Endothelial cell of umbilical vein (primary cell): ENCODE measurements at regions of chr4 and their contacts with region 1.

Region 1: GRCh38 chr4:113394730-113395530 is 345.5 kb downstream of the ANK2 start:
- DNase-seq: peak; percentile 92
- H3K4me3 ChIP-seq: no peak overlapping the region
- H3K27ac ChIP-seq: no peak overlapping the region
- H3K4me1 ChIP-seq: peaks cover 6% of the 10 kb centered on the region
- H3K27me3 ChIP-seq: no peaks in the 10 kb centered on the region
- CTCF ChIP-seq: peak; percentile 43 to 50
- POLR2A ChIP-seq: no peak

Region 2: GRCh38 chr4:113278324-113278934 is 116.5 kb before region 1 on chr4:
- CTCF ChIA-PET with region 1: interaction called, 3 read pairs
- POLR2A ChIA-PET with region 1: no interaction called
- dilution Hi-C with region 1: no loop called
- intact Hi-C with region 1: loop called (anchors 2 kb)
- DNase-seq: peak; percentile 70
- H3K4me3 ChIP-seq: no peak overlapping the region
- H3K27ac ChIP-seq: no peak overlapping the region
- H3K4me1 ChIP-seq: no peaks in the 10 kb centered on the region
- H3K27me3 ChIP-seq: peaks cover 5 to 19% of the 10 kb centered on the region in 2 experiments
- CTCF ChIP-seq: peak; percentile 86 to 87
- POLR2A ChIP-seq: no peak

Region 3: DNA sequence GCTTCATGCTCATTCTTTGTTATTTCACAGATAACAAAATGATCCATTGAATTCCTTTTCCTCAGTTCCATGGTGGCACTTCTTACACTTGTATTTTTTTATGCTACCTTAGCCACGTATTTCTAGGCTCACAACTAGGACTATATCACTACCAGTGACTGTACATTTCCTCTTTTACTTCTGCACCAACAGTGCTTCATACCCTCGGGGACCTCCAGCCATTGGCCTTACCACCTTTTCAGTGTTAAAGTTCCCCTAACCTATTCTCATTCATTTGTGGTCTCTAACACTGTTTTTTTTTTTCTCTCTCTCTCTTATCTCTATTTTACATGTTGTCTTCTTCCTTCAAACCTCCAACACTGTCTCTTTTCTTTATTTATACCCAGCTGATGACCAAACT is 29.6 kb before region 1 on chr4:
- CTCF ChIA-PET with region 1: no interaction called
- POLR2A ChIA-PET with region 1: no interaction called
- dilution Hi-C with region 1: no loop called
- intact Hi-C with region 1: no loop called
- DNase-seq: no peak
- H3K4me3 ChIP-seq: no peak overlapping the region
- H3K27ac ChIP-seq: no peak overlapping the region
- H3K4me1 ChIP-seq: no peaks in the 10 kb centered on the region
- H3K27me3 ChIP-seq: no peaks in the 10 kb centered on the region
- CTCF ChIP-seq: no peak
- POLR2A ChIP-seq: no peak

Region 4: GRCh38 chr4:113539408-113539807 is 144.5 kb after region 1 on chr4:
- CTCF ChIA-PET with region 1: interaction called, 10 read pairs
- POLR2A ChIA-PET with region 1: no interaction called
- dilution Hi-C with region 1: no loop called
- intact Hi-C with region 1: no loop called
- DNase-seq: no peak
- H3K4me3 ChIP-seq: no peak overlapping the region
- H3K27ac ChIP-seq: no peak overlapping the region
- H3K4me1 ChIP-seq: no peaks in the 10 kb centered on the region
- H3K27me3 ChIP-seq: no peaks in the 10 kb centered on the region
- CTCF ChIP-seq: no peak
- POLR2A ChIP-seq: no peak

Region 5: DNA sequence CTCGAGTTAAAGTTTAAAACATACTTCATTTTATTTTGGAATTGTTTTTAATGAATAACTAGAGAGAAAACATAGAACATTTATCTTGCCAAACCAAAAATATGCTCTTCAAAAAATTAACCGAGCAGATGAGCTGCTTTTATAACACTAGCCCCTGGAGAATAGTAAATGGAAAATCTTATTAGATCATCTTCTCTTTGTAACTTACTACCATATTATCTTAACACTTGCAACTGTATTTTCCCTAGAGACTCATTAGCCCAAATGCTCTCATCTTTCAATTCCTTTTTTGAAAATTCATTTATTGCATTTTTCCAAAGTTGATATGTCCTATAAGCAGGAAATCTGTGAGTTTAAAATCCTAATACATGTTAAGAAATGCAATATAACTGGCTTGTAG is 223.3 kb after region 1 on chr4:
- CTCF ChIA-PET with region 1: no interaction called
- POLR2A ChIA-PET with region 1: no interaction called
- dilution Hi-C with region 1: no loop called
- intact Hi-C with region 1: no loop called
- DNase-seq: no peak
- H3K4me3 ChIP-seq: no peak overlapping the region
- H3K27ac ChIP-seq: no peak overlapping the region
- H3K4me1 ChIP-seq: no peaks in the 10 kb centered on the region
- H3K27me3 ChIP-seq: no peaks in the 10 kb centered on the region
- CTCF ChIP-seq: no peak
- POLR2A ChIP-seq: no peak

Region 6: GRCh38 chr4:113781439-113782040 is 386.6 kb after region 1 on chr4:
- CTCF ChIA-PET with region 1: interaction called, 13 read pairs
- POLR2A ChIA-PET with region 1: no interaction called
- dilution Hi-C with region 1: no loop called
- intact Hi-C with region 1: loop called (anchors 5 kb)
- DNase-seq: peak; percentile 58
- H3K4me3 ChIP-seq: no peak overlapping the region
- H3K27ac ChIP-seq: no peak overlapping the region
- H3K4me1 ChIP-seq: peaks cover 19% of the 10 kb centered on the region
- H3K27me3 ChIP-seq: no peaks in the 10 kb centered on the region
- CTCF ChIP-seq: peak; percentile 32 to 40
- POLR2A ChIP-seq: no peak

Region 7: GRCh38 chr4:113952452-113953029 is 557.6 kb after region 1 on chr4:
- CTCF ChIA-PET with region 1: interaction called, 37 read pairs
- POLR2A ChIA-PET with region 1: no interaction called
- dilution Hi-C with region 1: no loop called
- intact Hi-C with region 1: loop called (anchors 1 kb)
- DNase-seq: peak; percentile 78
- H3K4me3 ChIP-seq: no peak overlapping the region
- H3K27ac ChIP-seq: no peak overlapping the region
- H3K4me1 ChIP-seq: peaks cover 20% of the 10 kb centered on the region
- H3K27me3 ChIP-seq: no peaks in the 10 kb centered on the region
- CTCF ChIP-seq: peak; percentile 64 to 72
- POLR2A ChIP-seq: no peak

Region 8: GRCh38 chr4:114386637-114387233 is 991.8 kb after region 1 on chr4:
- CTCF ChIA-PET with region 1: interaction called, 51 read pairs
- POLR2A ChIA-PET with region 1: no interaction called
- dilution Hi-C with region 1: no loop called
- intact Hi-C with region 1: loop called (anchors 1 kb)
- DNase-seq: peak; percentile 59
- H3K4me3 ChIP-seq: no peak overlapping the region
- H3K27ac ChIP-seq: no peak overlapping the region
- H3K4me1 ChIP-seq: no peaks in the 10 kb centered on the region
- H3K27me3 ChIP-seq: peaks cover 5 to 11% of the 10 kb centered on the region in 2 experiments
- CTCF ChIP-seq: peak; percentile 37 to 50
- POLR2A ChIP-seq: no peak